BJ (cell line): ENCODE measurements at regions of chr2 and their contacts with region 1.

Region 1: DNA sequence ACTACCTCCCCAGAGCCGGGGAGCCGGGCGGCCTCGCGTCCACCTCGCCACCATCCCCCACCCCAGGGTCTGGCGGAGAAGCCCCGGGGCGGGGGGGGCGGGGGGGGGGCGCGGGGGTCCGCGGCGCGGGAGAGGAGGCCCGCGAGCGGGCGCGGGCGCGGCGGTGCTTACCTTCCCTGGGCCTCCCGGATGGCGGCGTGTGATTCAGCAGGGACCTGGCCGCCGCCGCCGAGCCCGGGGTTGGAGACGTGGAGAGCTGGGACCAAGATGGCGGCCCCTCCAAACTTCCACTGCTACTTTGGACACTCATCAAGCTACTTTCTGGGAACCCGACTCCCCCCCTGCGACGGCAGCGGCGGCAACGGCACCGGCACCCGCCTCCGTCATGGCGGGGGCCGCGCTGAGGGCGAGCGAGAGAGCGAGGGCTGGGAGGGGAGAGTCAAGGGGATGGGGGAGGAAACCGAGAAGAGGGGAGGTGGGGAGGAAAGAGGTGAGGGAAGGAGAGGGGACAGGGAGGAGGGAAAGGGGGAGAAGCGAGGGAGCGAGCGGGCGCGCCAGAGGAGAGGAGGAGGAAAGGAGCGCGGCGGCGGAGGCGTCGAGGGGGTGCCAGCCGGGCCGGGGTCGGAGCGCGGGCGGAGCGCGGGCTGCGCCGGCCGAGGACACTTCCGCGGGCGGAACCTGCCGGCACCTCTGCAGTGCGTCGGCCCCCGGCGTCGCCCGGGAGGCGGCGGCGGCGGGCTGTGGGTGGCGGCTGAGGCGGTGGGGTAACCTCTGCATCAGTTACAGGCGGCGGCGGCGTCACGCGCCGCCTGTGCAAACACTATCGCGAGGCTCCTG is at the start of gene TLK1:
- DNase-seq: no peak
- H3K4me3 ChIP-seq: peak within 1 kb of the TSS; percentile 85
- H3K27me3 ChIP-seq: no peaks in the 10 kb centered on the region
- CTCF ChIP-seq: no peak
- polyA plus RNA-seq, gene TLK1: 6.4 and 18.2 TPM in 2 replicates

Region 2: DNA sequence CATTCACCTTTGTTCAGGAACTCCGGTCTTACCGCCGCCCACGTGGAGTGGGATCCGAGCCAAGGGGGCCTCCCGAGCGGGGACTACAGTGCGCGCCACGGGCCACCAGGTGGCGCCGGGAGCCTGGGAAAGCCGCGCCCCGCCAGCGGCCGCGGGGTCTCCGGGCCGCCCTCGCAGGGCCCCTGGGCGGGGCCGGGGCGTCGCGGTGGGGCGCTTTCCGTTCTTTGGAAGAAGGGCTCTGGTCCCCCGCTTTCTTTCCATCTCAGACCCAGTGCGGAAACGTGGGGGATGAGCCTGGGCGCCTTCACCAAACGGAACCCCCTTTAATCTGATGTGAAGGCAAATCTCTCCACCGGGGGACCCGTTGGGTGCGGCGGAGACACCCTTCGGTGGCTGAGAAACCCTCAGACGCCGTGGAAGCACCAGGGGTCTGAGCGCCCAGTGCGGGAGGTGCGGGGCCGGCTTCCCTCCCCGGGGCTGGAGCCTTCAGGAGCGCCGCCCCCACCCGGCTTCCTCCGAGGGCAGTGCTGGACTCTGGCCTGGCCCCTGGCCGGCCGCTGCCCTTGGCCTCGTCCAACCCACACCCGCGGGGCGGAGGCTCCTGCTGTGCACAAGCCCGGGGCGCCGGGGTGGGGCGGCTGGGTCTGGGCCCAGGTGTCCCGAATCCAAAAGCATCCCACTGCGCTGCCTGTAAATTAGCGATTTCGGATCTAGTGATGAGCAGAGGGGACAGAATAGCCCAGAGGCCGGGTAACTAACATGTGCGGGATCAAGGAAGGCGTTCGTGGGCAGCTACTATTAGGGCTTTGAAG is 186.6 kb before region 1 on chr2:
- CTCF ChIA-PET with region 1: interaction called, 11 read pairs
- POLR2A ChIA-PET with region 1: no interaction called
- DNase-seq: no peak
- H3K4me3 ChIP-seq: peak overlapping the region; percentile 75
- H3K27me3 ChIP-seq: no peaks in the 10 kb centered on the region
- CTCF ChIP-seq: peak; percentile 73

Region 3: GRCh38 chr2:171095014-171095582 is 65.2 kb before region 1 on chr2:
- CTCF ChIA-PET with region 1: no interaction called
- POLR2A ChIA-PET with region 1: no interaction called
- DNase-seq: no peak
- H3K4me3 ChIP-seq: no peak overlapping the region
- H3K27me3 ChIP-seq: no peaks in the 10 kb centered on the region
- CTCF ChIP-seq: no peak

Region 4: DNA sequence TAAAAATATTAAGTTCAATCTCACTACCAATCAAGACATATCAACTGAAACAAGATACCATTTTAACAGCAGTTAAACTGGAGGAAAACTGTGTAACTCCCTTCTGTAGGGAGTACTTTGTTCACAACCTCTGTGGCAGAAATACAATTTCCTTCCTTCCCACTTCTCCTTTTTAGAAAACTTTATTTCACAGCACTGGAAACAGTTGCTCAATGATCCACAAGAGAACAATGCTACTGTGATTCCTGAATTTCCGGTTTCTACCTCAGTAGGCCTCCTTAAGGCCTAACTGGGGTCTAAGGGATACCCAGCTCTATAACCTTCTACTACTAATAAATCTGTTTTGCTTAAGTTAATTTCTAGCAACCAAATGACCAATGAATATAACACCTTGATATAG is 13.7 kb before region 1 on chr2:
- CTCF ChIA-PET with region 1: interaction called, 3 read pairs
- POLR2A ChIA-PET with region 1: interaction called, 22 read pairs
- DNase-seq: no peak
- H3K4me3 ChIP-seq: no peak overlapping the region
- H3K27me3 ChIP-seq: no peaks in the 10 kb centered on the region
- CTCF ChIP-seq: no peak